B cell (primary cell): ENCODE measurements at regions of chr10 and their contacts with region 1.

Region 1: DNA sequence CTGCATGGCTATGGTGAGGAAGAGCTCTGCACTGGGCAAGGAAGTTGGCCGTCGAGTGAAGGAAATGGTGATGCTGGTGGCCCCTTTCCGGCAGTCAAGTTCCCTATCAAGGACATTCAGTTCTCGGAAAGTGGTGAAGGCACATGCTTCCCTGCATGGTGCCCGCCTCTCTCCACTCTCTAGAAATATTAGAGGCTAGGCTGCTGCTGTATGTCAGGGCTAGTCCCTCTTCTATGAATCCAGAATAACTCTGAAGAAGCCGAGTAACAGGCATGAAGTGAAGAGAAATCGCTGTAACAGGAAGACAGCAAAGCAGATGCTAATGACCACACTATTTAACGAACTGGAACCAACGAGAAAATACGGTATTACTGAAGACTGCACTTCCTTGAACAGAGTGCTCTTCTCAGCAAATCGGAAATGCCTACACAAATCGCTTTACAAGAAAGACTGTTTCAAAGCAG is 5.4 kb downstream of the IDI1 start:
- DNase-seq: peak; percentile 83
- ATAC-seq: peak; percentile 59
- H3K4me3 ChIP-seq: peak overlapping the region; percentile 32 to 81 (median 59)
- H3K4me3 Mint-ChIP-seq: peak overlapping the region; percentile 83
- H3K27ac ChIP-seq: peak overlapping the region; percentile 65 to 86
- H3K27ac Mint-ChIP-seq: peak overlapping the region; percentile 95
- H3K4me1 ChIP-seq: peaks cover 40 to 43% of the 10 kb centered on the region in 2 donors
- H3K4me1 Mint-ChIP-seq: peaks cover 50% of the 10 kb centered on the region
- H3K27me3 ChIP-seq: no peaks in the 10 kb centered on the region
- H3K27me3 Mint-ChIP-seq: no peaks in the 10 kb centered on the region
- CTCF ChIP-seq: no peak

Region 2: GRCh38 chr10:851901-852300 is 191.7 kb before region 1 on chr10:
- CTCF ChIA-PET with region 1: no interaction called
- POLR2A ChIA-PET with region 1: no interaction called
- intact Hi-C with region 1: loop called (anchors 5 kb)
- DNase-seq: peak; percentile 81
- ATAC-seq: peak; percentile 83
- H3K4me3 ChIP-seq: peak overlapping the region in 2 of 5 experiments; percentile 22 to 33
- H3K4me3 Mint-ChIP-seq: peak overlapping the region; percentile 59
- H3K27ac ChIP-seq: peak overlapping the region; percentile 62 to 85
- H3K27ac Mint-ChIP-seq: peak overlapping the region; percentile 80
- H3K4me1 ChIP-seq: peaks cover 18 to 22% of the 10 kb centered on the region in 2 donors
- H3K4me1 Mint-ChIP-seq: peaks cover 49% of the 10 kb centered on the region
- H3K27me3 ChIP-seq: no peaks in the 10 kb centered on the region
- H3K27me3 Mint-ChIP-seq: no peaks in the 10 kb centered on the region
- CTCF ChIP-seq: no peak

Region 3: DNA sequence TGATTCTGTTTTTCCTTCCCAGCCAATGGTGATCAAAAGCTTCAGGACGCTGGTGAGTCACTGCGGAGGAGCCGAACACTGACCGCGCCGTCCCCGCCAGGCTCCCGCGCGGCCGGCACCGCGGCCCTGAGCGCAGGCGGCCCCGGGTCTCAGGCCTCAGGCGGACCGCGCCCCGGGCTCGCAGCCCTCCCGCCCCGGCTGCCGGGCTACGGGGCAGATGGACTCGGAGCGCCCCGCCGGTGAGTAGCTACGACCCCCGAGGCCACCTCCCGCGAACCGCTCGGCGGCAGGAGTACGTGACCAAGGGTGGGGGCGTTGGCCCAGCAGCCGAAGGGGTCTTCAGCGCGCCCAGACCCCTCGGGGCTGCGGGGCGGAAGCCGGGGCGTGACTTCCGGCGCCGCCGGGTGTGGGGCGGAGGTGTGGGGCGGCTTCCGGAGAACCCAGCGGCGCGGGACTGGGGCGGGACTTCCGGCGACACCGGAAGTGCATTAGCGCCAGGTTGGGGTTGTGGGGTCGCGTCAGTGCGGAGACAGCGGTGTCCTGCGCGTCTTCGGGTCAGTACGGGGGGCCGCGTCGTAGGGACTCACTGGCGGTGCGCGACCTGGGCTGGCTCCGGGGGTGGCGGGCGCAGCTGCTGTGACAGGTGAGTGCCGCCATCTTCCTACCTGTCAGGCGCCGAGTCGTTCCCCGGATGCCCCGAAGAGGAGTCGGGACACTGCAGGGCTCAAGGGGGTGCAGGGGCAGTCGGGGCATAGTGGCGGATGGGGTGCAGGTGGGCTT is 13.0 kb after region 1 on chr10 and contains the start of gene WDR37:
- CTCF ChIA-PET with region 1: no interaction called
- POLR2A ChIA-PET with region 1: interaction called, 6 read pairs
- intact Hi-C with region 1: loop called (anchors 1 kb)
- DNase-seq: peak; percentile 92
- ATAC-seq: peak; percentile 91
- H3K4me3 ChIP-seq: peak within 1 kb of the TSS; percentile 84 to 99 (median 89)
- H3K4me3 Mint-ChIP-seq: peak within 1 kb of the TSS; percentile 97
- H3K27ac ChIP-seq: peak within 1 kb of the TSS; percentile 90 to 93
- H3K27ac Mint-ChIP-seq: peak within 1 kb of the TSS; percentile 96
- H3K4me1 ChIP-seq: peaks cover 24 to 36% of the 10 kb centered on the region in 2 donors
- H3K4me1 Mint-ChIP-seq: peaks cover 67% of the 10 kb centered on the region
- H3K27me3 ChIP-seq: no peaks in the 10 kb centered on the region
- H3K27me3 Mint-ChIP-seq: no peaks in the 10 kb centered on the region
- CTCF ChIP-seq: no peak
- total RNA-seq, gene WDR37: 32.3 and 33.2 TPM in 2 replicates